HepG2 (cell line): ENCODE measurements at regions of chr15 and their contacts with region 1.

Region 1: DNA sequence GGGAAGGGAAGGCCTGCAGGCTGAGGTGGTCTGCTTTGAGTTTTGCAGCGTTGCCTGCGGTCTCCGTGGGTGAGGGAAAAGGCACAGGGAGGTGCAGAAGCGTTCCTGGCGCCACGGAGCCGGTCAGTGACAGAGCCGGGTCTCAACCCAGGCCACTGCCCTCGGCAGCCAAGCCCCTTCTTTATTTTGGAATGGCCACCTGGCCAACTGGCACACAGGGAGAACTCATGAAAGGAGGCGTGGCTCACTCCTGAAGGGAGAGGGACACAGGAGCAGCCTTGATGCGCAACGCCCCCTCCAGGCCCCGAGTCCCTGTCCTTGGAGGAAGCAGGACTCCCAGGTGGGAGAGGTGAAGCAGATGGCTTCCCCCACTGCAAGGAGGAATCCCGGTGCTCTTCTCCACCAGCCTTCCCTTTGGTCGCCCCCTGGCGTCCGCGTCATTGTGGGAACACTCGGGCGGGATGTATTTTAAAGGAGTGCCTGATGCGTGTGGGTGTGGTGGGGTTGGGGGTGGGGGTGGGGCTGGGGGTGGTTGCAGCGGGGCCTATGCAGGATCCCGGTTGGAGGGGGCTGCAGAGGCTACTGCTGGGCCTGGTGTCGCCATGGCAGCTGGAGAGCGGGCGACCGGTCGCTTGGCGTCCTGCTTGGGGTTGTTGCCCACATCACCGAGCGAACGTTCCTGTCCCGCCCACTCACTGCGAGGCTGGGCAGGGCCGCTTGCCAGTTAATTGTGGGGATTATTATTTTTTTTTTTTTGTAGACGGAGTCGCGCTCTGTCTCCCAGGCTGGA is 32.5 kb downstream of the APBA2 start:
- DNase-seq: peak; percentile 20
- ATAC-seq: peak; percentile 55
- H3K4me3 ChIP-seq: no peak overlapping the region
- H3K27ac ChIP-seq: no peak overlapping the region
- H3K4me1 ChIP-seq: no peaks in the 10 kb centered on the region
- H3K27me3 ChIP-seq: no peaks in the 10 kb centered on the region
- CTCF ChIP-seq: peak; percentile 56
- EP300 ChIP-seq: no peak
- POLR2A ChIP-seq: no peak
- RAD21 ChIP-seq: peak; percentile 32; the same call in 1 of the 2 replicates

Region 2: DNA sequence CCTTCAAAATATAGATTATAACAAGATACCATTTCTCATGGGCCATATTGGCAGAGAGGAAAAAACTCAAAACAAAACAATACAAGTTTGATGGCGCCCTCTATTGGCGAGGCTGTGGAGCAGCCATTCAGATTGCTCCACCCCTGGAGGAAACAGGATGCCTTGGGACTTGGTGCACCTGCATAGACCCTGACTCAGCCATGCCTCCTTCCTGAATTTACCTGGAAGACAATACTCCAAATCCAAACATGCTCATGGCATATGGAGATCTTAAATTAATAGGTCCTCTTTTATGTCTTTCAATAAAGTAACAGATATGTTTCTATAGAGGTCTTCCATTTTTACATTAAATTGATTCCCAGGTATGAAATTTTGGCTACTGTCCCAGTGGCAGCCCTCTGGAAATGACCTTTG is 57.5 kb after region 1 on chr15:
- CTCF ChIA-PET with region 1: no interaction called
- POLR2A ChIA-PET with region 1: no interaction called
- in situ Hi-C with region 1: no loop called
- intact Hi-C with region 1: loop called (anchors 10 kb)
- DNase-seq: peak; percentile 42
- ATAC-seq: peak; percentile 83
- H3K4me3 ChIP-seq: no peak overlapping the region
- H3K27ac ChIP-seq: no peak overlapping the region
- H3K4me1 ChIP-seq: no peaks in the 10 kb centered on the region
- H3K27me3 ChIP-seq: no peaks in the 10 kb centered on the region; a peak in 1 of 5 replicates
- CTCF ChIP-seq: peak; percentile 79
- EP300 ChIP-seq: no peak
- POLR2A ChIP-seq: no peak
- RAD21 ChIP-seq: 0 out of 2 replicates have a peak, but pooled peaks have one; percentile 17